PC-9 (cell line): ENCODE measurements at regions of chr15 and their contacts with region 1.

Region 1: DNA sequence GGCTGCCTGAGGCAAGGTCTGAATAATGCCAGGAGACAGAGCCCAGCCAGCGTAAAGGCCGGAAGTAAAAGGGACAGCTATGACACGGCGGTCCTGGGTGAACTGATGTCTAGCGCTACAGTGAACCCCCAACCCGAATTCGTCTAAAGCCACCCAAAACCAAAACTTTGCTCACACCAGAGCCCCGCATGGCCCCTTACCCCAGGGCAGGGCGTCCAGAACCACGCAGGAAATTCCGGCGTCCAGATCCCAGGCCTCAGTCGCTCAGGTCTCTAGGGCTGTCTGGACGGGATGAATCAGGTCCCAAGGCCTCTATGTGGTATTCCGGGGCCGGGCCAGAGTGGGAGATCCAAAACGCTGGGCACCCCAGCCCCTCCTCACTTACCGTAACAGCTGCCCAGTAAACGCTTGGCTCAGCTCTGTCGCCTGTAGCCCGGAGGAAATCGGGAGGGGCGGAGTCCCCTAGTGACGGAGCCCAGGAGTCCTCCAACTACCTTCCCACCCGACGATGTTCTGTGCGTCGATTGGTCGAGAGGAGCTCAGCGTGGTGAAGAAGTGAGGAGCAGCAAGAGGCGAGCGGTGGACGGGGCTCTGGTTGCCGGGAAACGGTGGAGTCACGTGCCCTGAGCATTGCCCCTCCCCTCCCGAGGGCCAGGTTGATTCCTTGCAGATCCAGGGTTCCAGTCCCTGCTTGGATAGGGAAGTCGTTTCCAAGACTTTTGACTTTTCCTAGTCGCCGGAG is at the start of gene CCDC32:
- DNase-seq: peak; percentile 94 to 96
- H3K4me3 ChIP-seq: peak within 1 kb of the TSS; percentile 89
- H3K27ac ChIP-seq: peak within 1 kb of the TSS; percentile 51
- H3K4me1 ChIP-seq: peaks cover 10% of the 10 kb centered on the region
- H3K27me3 ChIP-seq: no peaks in the 10 kb centered on the region
- CTCF ChIP-seq: no peak
- total RNA-seq, gene CCDC32: 19.5 and 22.2 TPM in 2 replicates

Region 2: DNA sequence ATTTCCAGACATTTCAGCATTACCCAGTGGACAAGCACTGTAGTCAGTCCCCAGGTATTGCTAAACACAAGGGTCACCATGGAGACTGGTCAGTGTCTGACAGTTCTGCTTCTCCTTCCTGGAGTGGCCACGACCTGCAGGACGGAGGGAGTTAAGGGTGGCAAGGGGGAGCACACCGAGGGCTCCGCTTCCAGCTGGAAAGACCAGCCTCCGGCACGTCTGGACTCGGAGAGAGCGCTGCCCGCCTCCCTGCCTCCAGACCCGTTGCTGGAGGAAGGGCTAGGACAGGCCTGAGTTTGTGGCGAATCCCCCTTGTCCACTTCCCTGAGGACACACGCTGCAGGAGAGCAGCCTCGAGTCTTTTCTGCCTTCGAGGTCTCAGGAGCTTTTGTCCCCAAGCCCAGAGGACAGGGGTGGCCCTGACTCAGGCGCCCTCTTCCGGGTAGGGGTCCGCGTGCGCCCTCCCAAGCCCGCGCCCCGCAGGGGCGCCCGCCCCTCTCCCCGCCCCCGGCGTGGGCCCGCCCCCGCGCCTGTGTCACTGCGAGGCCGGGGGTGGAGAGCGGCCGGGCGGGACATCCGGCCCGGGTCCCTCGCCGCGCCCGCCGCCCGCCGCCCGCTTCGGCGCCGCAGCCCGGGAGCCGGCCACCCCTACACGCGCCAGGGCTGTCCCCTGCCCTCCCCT is 94.2 kb before region 1 on chr15 and contains the start of gene CHST14:
- CTCF ChIA-PET with region 1: no interaction called
- POLR2A ChIA-PET with region 1: interaction called, 3 read pairs
- intact Hi-C with region 1: loop called (anchors 2 kb)
- DNase-seq: peak; percentile 58 to 61
- H3K4me3 ChIP-seq: peak within 1 kb of the TSS; percentile 66
- H3K27ac ChIP-seq: peak within 1 kb of the TSS; percentile 31
- H3K4me1 ChIP-seq: peaks cover 17% of the 10 kb centered on the region
- H3K27me3 ChIP-seq: no peaks in the 10 kb centered on the region
- CTCF ChIP-seq: no peak
- total RNA-seq, gene CHST14: 30.6 and 34.3 TPM in 2 replicates

Region 3: DNA sequence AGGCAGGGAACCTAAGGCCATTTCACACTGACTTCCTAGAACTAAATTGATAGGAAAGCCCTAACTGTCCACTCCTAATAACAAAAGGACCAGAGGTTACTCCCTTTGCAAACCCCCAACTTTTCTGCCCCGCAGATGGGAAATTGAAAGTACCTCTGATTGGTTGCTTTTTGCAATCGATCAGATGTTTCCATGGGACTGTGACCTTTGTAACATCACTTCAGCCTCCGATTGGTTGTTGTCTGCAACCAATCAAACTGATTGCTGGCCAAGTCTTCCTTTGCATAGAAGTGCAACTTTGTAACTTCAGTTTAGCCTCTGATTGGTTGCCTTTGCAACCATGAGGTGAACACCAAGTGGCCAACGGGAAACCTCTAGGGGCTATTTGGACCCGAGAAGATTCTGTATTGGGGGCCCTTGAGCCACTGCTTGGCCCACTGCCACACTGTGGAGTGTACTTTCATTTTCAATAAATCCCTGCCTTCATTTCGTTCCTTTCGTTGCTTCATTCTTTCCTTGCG is 18.0 kb after region 1 on chr15:
- CTCF ChIA-PET with region 1: no interaction called
- POLR2A ChIA-PET with region 1: interaction called, 15 read pairs
- intact Hi-C with region 1: no loop called
- DNase-seq: peak; percentile 45 to 79
- H3K4me3 ChIP-seq: peak overlapping the region; percentile 71
- H3K27ac ChIP-seq: peak overlapping the region; percentile 44
- H3K4me1 ChIP-seq: no peaks in the 10 kb centered on the region
- H3K27me3 ChIP-seq: no peaks in the 10 kb centered on the region
- CTCF ChIP-seq: no peak

Region 4: DNA sequence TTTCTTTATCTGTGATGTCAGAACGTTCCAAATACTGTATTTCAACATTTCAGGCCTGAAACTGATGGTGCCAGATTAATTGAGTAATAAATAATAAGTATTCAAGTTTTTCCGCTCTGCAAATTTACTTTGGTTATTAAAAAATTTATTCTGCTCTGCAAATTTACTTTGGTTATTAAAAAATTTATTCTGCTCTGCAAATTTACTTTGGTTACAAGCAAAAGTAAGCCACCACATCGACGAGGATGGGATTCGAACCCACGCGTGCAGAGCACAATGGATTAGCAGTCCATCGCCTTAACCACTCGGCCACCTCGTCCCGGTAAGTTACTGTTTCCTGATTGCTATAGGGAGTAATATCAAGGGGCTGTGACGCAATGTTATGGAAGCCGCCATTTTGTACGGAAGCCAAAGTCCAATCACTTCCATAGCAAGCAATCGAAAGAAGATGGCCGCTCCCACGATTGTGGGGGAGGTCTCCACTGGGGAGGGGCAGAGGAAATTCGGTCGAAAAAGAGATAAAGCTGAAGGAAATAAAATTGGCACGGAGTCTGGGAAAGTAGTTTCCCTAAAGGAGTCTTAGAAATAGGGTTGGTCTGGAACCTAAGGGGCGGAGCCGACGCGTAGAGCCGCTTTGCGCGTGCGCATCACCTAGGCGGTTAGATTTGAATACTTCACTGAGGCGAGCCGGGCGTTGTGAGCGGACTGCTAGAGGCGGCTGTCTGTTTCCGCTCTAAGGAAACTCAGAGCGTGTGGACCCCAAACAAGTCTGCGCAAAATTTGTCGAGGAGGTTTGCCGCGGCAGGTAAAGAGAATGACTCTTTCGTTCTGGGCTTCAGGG is 29.0 kb after region 1 on chr15 and contains the start of gene KNL1:
- CTCF ChIA-PET with region 1: interaction called, 13 read pairs
- POLR2A ChIA-PET with region 1: interaction called, 27 read pairs
- intact Hi-C with region 1: no loop called
- DNase-seq: peak; percentile 79 to 94
- H3K4me3 ChIP-seq: peak within 1 kb of the TSS; percentile 93
- H3K27ac ChIP-seq: peak within 1 kb of the TSS; percentile 88
- H3K4me1 ChIP-seq: peaks cover 8% of the 10 kb centered on the region; the same call in 1 of the 2 replicates
- H3K27me3 ChIP-seq: no peaks in the 10 kb centered on the region
- CTCF ChIP-seq: no peak
- total RNA-seq, gene KNL1: 16.2 and 27.5 TPM in 2 replicates

Region 5: GRCh38 chr15:41779662-41780157 is 1214.9 kb after region 1 on chr15:
- CTCF ChIA-PET with region 1: no interaction called
- POLR2A ChIA-PET with region 1: interaction called, 15 read pairs
- intact Hi-C with region 1: no loop called
- DNase-seq: no peak
- H3K4me3 ChIP-seq: no peak overlapping the region
- H3K27ac ChIP-seq: no peak overlapping the region
- H3K4me1 ChIP-seq: peaks cover 15% of the 10 kb centered on the region
- H3K27me3 ChIP-seq: no peaks in the 10 kb centered on the region
- CTCF ChIP-seq: no peak